Heart left ventricle (tissue), 16 donors: ENCODE measurements at regions of chr1 and their contacts with region 1.

Region 1: DNA sequence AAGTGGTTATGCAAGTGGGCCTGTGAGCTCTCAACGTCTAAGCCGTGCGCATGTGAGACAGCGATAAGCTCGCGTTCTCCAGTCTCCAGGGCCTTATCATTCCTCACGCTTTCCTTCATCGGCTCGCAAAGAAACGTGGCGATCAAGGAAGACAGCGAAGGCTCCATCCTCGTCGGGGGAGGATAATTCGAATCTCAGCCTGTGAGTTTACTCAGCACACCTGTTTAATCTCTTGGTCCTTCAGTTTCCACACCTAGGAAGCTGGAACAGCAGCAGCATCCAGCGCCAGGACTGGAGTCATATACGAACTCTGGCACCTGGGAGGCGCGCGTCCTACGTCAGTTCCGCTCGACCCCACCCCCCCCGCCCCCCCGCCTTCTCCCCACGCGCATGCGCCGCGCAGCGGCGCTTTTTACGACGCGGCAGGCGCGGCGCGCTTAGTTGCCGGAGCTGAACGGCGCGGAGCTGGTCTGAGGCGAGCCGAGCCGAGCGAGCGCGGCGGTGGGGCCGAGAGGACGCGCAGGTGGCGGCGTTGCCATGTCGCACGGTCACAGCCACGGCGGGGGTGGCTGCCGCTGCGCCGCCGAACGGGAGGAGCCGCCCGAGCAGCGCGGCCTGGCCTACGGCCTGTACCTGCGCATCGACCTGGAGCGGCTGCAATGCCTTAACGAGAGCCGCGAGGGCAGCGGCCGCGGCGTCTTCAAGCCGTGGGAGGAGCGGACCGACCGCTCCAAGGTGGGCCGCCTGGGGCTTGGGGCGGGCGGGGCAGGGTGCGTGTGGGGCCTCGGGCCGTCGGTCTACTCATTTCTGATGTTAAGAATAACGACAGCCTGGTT is at the start of gene PITHD1:
- DNase-seq: peak; percentile 78 to 90 (median 82)
- ATAC-seq: peak; percentile 87 to 94 (median 90)
- H3K4me3 ChIP-seq: peak within 1 kb of the TSS; percentile 66 to 100 (median 93)
- H3K27ac ChIP-seq: peak within 1 kb of the TSS; percentile 7 to 97 (median 89)
- H3K4me1 ChIP-seq: peaks cover 4 to 44% (median 30%) of the 10 kb centered on the region in 12 donors
- H3K27me3 ChIP-seq: no peaks in the 10 kb centered on the region
- CTCF ChIP-seq: no peak
- POLR2A ChIP-seq: peak; percentile 83 to 89
- total RNA-seq, gene PITHD1: 34.8 to 59.2 (median 46.2) TPM

Region 2: DNA sequence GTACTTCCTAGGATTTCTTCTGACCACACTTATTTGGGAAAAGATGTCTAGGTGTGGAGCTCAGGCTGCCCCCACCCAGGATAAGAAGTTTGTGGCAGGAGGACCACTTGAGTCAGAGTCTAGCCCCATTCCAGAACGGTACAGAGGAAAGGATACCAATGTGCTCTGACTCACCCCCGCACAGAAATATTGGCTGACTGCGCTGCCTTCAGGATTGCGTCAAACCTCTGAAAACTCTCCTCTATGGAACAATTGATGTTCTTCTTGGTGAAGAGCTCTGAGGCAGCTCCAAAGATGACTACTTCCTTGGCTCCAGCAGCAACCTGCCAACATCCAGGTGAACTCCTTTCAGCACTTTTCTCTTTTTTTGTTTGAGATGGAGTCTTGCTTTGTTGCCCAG is 35.8 kb after region 1 on chr1:
- intact Hi-C with region 1: no loop called
- DNase-seq: no peak
- ATAC-seq: no peak
- H3K4me3 ChIP-seq: no peak overlapping the region
- H3K27ac ChIP-seq: no peak overlapping the region
- H3K4me1 ChIP-seq: peaks cover 0 to 21% (median 0%) of the 10 kb centered on the region in 12 donors
- H3K27me3 ChIP-seq: no peaks in the 10 kb centered on the region
- CTCF ChIP-seq: no peak
- POLR2A ChIP-seq: no peak

Region 3: DNA sequence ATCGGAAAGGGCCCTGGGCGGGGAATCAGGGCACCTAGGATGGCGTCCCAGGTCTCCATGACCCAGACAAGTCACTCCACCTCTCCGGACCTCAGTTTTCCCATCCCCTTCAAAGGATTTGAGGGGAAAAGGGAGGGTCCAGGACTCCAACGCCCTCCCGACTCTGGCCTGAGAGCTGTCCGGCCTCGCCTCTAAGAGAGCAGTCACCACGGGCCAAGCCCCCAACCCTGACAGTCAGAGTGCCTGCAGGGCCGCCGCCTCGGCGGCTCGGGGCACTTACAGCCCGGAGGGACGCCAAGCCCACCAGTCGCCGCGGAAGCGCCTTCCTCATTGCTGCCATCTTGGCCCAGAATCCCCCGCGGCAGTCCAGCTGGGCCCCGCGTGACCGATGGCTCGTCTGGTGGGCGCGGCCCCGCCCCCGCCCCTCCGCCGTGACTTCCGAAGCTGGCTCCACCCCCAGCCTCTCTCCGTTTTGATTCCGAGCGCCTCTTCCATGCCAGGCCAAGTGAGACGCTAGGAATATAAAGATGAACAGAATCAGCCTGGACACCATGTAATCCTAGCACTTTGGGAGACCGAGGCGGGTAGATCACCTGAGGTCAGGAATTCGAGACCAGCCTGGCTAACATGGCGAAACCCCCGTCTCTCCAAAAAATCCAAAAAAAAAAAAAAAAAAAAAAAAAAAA is 47.0 kb after region 1 on chr1 and contains the start of gene HMGCL:
- intact Hi-C with region 1: loop called in 1 of 10 experiments (anchors 10 kb)
- DNase-seq: peak; percentile 93 to 95 (median 93)
- ATAC-seq: peak; percentile 96 to 100 (median 99)
- H3K4me3 ChIP-seq: peak within 1 kb of the TSS; percentile 74 to 100 (median 97)
- H3K27ac ChIP-seq: peak within 1 kb of the TSS; percentile 89 to 98 (median 96)
- H3K4me1 ChIP-seq: peaks cover 0 to 18% (median 10%) of the 10 kb centered on the region in 12 donors
- H3K27me3 ChIP-seq: no peaks in the 10 kb centered on the region
- CTCF ChIP-seq: peak in 1 of 12 donors; percentile 7
- POLR2A ChIP-seq: peak in 1 of 2 donors; percentile 85
- total RNA-seq, gene HMGCL: 22.0 to 44.3 (median 41.1) TPM

Region 4: DNA sequence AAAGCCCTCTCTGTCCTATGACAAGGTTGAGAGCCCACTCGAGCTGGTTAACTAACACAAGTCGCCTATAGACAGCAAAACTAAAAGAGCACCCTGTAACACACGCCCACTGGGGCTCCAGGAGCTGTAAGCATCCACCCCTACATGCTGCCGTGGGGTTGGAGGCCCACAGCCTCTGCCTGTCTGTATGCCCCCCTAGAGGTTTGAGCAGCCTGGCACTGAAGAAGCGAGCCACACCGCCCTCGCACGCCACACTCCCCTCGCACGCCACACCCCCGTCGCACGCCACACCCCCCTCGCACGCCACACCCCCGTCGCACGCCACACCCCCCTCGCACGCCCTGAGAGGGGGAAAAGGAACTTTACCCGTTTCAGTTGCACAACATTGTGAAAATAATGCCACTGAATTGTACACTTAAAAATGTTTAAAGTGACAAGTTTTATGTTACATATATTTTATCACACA is 60.2 kb after region 1 on chr1:
- intact Hi-C with region 1: no loop called
- DNase-seq: peak; percentile 48 to 85 (median 64)
- ATAC-seq: peak; percentile 88 to 99 (median 98)
- H3K4me3 ChIP-seq: peak overlapping the region in 10 of 12 donors; percentile 16 to 49 (median 40)
- H3K27ac ChIP-seq: no peak overlapping the region
- H3K4me1 ChIP-seq: peaks cover 0 to 12% (median 4%) of the 10 kb centered on the region in 12 donors
- H3K27me3 ChIP-seq: no peaks in the 10 kb centered on the region
- CTCF ChIP-seq: no peak
- POLR2A ChIP-seq: no peak